ENCODE measurements at regions of chr10 and their contacts with region 1.

Region 1: DNA sequence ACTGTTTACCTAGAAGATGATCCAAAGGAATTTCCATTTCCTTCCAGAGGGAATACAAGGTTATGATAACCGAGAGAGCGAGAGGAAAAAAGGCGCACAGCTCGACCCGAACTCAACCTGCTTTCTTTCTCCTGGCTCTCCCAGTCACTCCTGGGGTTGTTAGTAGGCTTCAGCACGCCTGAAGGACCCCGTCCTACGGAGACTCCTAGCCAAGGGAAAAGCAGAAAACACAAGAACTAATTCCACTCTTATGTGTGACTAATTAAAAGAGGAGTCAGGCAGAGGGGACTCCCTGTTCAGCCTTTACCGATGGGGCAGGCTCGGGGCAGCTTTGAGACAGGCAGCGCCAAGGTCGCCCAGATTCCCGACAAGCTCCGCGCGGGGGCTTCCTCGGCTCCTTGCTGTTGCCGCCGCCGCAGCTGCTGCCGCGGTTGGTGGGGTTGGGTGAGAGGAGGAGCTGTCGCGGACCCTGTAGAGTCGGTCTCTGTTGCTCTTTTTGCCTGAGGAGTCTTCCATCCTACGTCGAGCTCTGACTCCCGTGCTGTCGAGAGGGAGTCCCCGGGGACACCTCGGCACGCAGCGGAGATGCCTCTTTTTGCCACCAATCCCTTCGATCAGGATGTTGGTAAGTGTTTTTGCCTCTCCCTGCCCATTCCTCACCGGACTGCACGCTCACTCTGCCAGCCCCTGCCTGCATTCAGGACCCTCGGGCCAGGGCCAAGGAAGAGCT is at the start of gene STAM:
- DNase-seq: peak; percentile 97
- H3K4me3 Mint-ChIP-seq: peak within 1 kb of the TSS; percentile 96
- H3K27ac Mint-ChIP-seq: peak within 1 kb of the TSS; percentile 100
- H3K4me1 Mint-ChIP-seq: peaks cover 44% of the 10 kb centered on the region
- H3K27me3 Mint-ChIP-seq: no peaks in the 10 kb centered on the region
- total RNA-seq, gene STAM: 22.2 and 25.0 TPM in 2 replicates

Region 2: GRCh38 chr10:16817125-16818019 is 826.5 kb before region 1 on chr10 and contains the start of gene RSU1:
- intact Hi-C with region 1: loop called (anchors 5 kb)
- DNase-seq: peak; percentile 100
- H3K4me3 Mint-ChIP-seq: peak within 1 kb of the TSS; percentile 98
- H3K27ac Mint-ChIP-seq: peak within 1 kb of the TSS; percentile 97
- H3K4me1 Mint-ChIP-seq: peaks cover 31% of the 10 kb centered on the region
- H3K27me3 Mint-ChIP-seq: peaks cover 10% of the 10 kb centered on the region
- total RNA-seq, gene RSU1: 44.5 and 47.4 TPM in 2 replicates

Region 3: DNA sequence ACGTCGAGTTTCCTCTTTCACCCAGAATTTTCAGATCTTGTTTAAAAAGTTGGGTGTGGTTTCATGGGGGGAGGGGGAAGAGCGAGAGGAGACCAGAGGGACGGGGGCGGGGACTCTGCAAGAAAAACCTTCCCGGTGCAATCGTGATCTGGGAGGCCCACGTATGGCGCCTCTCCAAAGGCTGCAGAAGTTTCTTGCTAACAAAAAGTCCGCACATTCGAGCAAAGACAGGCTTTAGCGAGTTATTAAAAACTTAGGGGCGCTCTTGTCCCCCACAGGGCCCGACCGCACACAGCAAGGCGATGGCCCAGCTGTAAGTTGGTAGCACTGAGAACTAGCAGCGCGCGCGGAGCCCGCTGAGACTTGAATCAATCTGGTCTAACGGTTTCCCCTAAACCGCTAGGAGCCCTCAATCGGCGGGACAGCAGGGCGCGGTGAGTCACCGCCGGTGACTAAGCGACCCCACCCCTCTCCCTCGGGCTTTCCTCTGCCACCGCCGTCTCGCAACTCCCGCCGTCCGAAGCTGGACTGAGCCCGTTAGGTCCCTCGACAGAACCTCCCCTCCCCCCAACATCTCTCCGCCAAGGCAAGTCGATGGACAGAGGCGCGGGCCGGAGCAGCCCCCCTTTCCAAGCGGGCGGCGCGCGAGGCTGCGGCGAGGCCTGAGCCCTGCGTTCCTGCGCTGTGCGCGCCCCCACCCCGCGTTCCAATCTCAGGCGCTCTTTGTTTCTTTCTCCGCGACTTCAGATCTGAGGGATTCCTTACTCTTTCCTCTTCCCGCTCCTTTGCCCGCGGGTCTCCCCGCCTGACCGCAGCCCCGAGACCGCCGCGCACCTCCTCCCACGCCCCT is 415.6 kb before region 1 on chr10 and contains the start of gene VIM:
- intact Hi-C with region 1: loop called (anchors 5 kb)
- DNase-seq: peak; percentile 94
- H3K4me3 Mint-ChIP-seq: peak within 1 kb of the TSS; percentile 96
- H3K27ac Mint-ChIP-seq: peak within 1 kb of the TSS; percentile 95
- H3K4me1 Mint-ChIP-seq: peaks cover 44% of the 10 kb centered on the region
- H3K27me3 Mint-ChIP-seq: peaks cover 2% of the 10 kb centered on the region
- total RNA-seq, gene VIM: 178 and 182 TPM in 2 replicates

Region 4: GRCh38 chr10:17655567-17656146 is 11.7 kb after region 1 on chr10:
- intact Hi-C with region 1: loop called (anchors 1 kb)
- DNase-seq: peak; percentile 38
- H3K4me3 Mint-ChIP-seq: no peak overlapping the region
- H3K27ac Mint-ChIP-seq: peak overlapping the region; percentile 66
- H3K4me1 Mint-ChIP-seq: peaks cover 46% of the 10 kb centered on the region
- H3K27me3 Mint-ChIP-seq: no peaks in the 10 kb centered on the region

Region 5: GRCh38 chr10:17685233-17685840 is 41.4 kb after region 1 on chr10:
- intact Hi-C with region 1: loop called (anchors 1 kb)
- DNase-seq: no peak
- H3K4me3 Mint-ChIP-seq: no peak overlapping the region
- H3K27ac Mint-ChIP-seq: peak overlapping the region; percentile 26
- H3K4me1 Mint-ChIP-seq: peaks cover 29% of the 10 kb centered on the region
- H3K27me3 Mint-ChIP-seq: no peaks in the 10 kb centered on the region

Region 6: DNA sequence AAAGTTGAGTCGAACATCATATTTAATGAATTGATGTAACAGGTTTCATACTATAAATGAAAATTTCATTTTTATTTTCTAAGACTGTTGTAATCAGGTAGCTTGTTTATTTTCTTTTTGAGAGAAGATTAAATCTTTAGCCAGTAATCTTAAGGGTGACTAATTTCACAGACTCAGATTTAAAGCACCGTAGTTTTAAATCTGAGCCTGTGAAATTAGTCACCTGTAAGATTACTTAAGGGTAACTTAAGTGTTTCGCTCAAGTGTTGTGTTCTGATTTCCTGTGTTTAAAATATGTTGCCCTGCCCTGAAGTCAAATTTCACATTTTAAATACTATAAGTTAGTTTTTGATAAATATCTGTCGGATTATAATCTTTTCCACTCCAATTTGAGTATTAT is 72.2 kb after region 1 on chr10:
- intact Hi-C with region 1: no loop called
- DNase-seq: no peak
- H3K4me3 Mint-ChIP-seq: no peak overlapping the region
- H3K27ac Mint-ChIP-seq: no peak overlapping the region
- H3K4me1 Mint-ChIP-seq: no peaks in the 10 kb centered on the region
- H3K27me3 Mint-ChIP-seq: no peaks in the 10 kb centered on the region

Region 7: GRCh38 chr10:17742918-17743317 is 99.0 kb after region 1 on chr10:
- intact Hi-C with region 1: loop called (anchors 1 kb)
- DNase-seq: peak; percentile 90
- H3K4me3 Mint-ChIP-seq: no peak overlapping the region
- H3K27ac Mint-ChIP-seq: no peak overlapping the region
- H3K4me1 Mint-ChIP-seq: peaks cover 9% of the 10 kb centered on the region
- H3K27me3 Mint-ChIP-seq: no peaks in the 10 kb centered on the region